SK-N-SH (cell line): ENCODE measurements at regions of chr3 and their contacts with region 1.

Region 1: DNA sequence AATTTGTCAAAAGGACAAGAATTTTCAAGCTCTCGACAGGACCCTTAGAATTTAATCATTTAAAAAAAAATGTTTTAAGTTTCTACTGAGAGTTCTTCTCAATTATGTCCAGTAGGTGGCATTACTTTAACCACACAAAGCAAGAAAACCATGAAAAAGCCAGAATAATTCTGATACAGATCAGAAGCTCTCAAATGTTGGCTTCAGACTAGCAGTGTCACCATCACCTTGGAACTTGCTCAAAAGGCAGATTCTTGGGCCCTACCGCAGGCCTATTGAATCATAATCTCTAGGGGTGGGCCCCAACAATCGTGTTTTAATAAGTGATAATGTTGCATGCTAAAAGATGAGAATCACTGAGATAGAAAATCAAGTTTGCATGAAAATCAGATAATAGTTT is 99.5 kb upstream of the KCNMB2 start:
- DNase-seq: peak; percentile 55
- H3K4me3 ChIP-seq: peak overlapping the region in 1 of 2 experiments; percentile 39; a peak in 1 of 4 replicates
- H3K27ac ChIP-seq: no peak overlapping the region
- H3K4me1 ChIP-seq: no peaks in the 10 kb centered on the region
- H3K27me3 ChIP-seq: no peaks in the 10 kb centered on the region
- CTCF ChIP-seq: peak; percentile 79
- EP300 ChIP-seq: no peak
- RAD21 ChIP-seq: peak; percentile 72

Region 2: GRCh38 chr3:178304758-178305467 is 131.9 kb before region 1 on chr3:
- CTCF ChIA-PET with region 1: no interaction called
- POLR2A ChIA-PET with region 1: no interaction called
- DNase-seq: no peak
- H3K4me3 ChIP-seq: no peak overlapping the region
- H3K27ac ChIP-seq: no peak overlapping the region
- H3K4me1 ChIP-seq: peaks cover 0 to 7% of the 10 kb centered on the region in 2 experiments; a peak in 2 of 4 replicates
- H3K27me3 ChIP-seq: no peaks in the 10 kb centered on the region
- CTCF ChIP-seq: no peak
- EP300 ChIP-seq: no peak
- RAD21 ChIP-seq: no peak

Region 3: GRCh38 chr3:178422406-178422805 is 14.4 kb before region 1 on chr3:
- CTCF ChIA-PET with region 1: interaction called, 25 read pairs
- POLR2A ChIA-PET with region 1: no interaction called
- DNase-seq: no peak
- H3K4me3 ChIP-seq: no peak overlapping the region
- H3K27ac ChIP-seq: no peak overlapping the region
- H3K4me1 ChIP-seq: no peaks in the 10 kb centered on the region
- H3K27me3 ChIP-seq: no peaks in the 10 kb centered on the region
- CTCF ChIP-seq: no peak
- EP300 ChIP-seq: no peak
- RAD21 ChIP-seq: no peak

Region 4: GRCh38 chr3:178451799-178452198 is 15.0 kb after region 1 on chr3:
- CTCF ChIA-PET with region 1: interaction called, 11 read pairs
- POLR2A ChIA-PET with region 1: no interaction called
- DNase-seq: no peak
- H3K4me3 ChIP-seq: no peak overlapping the region
- H3K27ac ChIP-seq: no peak overlapping the region
- H3K4me1 ChIP-seq: no peaks in the 10 kb centered on the region
- H3K27me3 ChIP-seq: no peaks in the 10 kb centered on the region
- CTCF ChIP-seq: no peak
- EP300 ChIP-seq: no peak
- RAD21 ChIP-seq: no peak

Region 5: DNA sequence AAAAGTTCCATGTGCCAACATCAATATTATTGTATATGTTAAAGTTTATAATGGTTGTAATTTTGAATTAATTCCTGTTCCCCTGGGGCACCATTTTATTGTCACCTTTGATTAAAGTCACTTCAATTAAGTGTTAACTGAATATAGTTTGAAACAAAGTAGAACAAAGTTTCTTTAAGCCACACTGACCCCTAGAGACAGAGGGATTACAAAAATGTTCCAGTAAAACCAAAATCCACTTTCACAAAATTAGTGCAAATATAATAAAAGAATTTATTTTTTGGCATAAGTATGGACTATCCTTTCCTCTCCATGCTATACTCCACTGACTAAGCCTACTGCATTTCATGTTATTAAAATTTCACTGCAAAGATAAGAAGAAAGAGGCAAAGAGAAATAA is 511.0 kb after region 1 on chr3:
- CTCF ChIA-PET with region 1: interaction called, 10 read pairs
- POLR2A ChIA-PET with region 1: no interaction called
- DNase-seq: no peak
- H3K4me3 ChIP-seq: no peak overlapping the region
- H3K27ac ChIP-seq: no peak overlapping the region
- H3K4me1 ChIP-seq: no peaks in the 10 kb centered on the region
- H3K27me3 ChIP-seq: no peaks in the 10 kb centered on the region
- CTCF ChIP-seq: peak; percentile 19
- EP300 ChIP-seq: no peak
- RAD21 ChIP-seq: peak; percentile 25; the same call in 1 of the 2 replicates

Region 6: DNA sequence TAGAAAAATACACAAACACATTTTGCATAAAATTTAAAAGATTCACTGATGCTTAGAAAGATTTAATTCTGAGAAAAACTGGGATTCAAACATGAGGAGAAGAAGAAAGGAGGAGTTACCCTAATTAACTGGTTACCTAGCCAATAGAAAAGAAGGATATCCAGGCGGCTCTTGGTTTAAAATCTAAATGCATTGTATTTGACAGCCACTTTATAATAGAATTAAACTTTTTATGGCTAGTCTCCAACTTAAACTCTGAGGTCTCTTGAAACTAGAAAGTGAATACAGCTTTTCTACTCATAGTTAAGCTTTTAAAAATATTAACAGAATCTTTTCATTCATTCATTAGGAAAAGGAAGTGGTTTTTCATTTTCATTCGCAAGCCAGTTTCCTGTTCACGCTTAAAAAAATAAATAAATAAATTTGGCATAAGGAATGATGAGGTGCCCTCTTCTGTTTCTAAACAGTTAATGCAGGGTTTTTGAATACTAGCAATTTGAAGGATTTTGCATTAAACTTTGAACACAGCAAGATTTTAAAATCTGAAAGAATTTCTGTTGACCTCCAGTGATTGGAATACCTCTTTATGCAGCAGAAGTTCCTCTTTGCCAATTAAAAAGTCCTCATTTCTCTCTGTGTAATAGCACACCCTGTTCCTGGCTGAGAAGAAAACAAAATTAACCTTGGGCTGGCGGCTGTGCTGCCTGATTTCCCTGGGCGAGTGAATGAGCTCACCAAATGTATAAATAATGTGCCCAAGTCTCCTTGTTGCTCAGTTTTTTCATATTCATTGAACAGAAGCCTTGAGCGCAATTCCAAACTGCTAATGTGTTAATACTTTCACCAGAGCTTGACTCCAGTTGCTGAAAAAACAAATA is 529.8 kb after region 1 on chr3:
- CTCF ChIA-PET with region 1: interaction called, 160 read pairs
- POLR2A ChIA-PET with region 1: no interaction called
- DNase-seq: peak; percentile 19
- H3K4me3 ChIP-seq: peak overlapping the region in 1 of 2 experiments; percentile 13; a peak in 1 of 4 replicates
- H3K27ac ChIP-seq: no peak overlapping the region
- H3K4me1 ChIP-seq: peaks cover 0 to 14% of the 10 kb centered on the region in 2 experiments; a peak in 2 of 4 replicates
- H3K27me3 ChIP-seq: no peaks in the 10 kb centered on the region
- CTCF ChIP-seq: peak; percentile 69
- EP300 ChIP-seq: no peak
- RAD21 ChIP-seq: peak; percentile 85